ENCODE measurements at regions of chr5 and their contacts with region 1.

Region 1: DNA sequence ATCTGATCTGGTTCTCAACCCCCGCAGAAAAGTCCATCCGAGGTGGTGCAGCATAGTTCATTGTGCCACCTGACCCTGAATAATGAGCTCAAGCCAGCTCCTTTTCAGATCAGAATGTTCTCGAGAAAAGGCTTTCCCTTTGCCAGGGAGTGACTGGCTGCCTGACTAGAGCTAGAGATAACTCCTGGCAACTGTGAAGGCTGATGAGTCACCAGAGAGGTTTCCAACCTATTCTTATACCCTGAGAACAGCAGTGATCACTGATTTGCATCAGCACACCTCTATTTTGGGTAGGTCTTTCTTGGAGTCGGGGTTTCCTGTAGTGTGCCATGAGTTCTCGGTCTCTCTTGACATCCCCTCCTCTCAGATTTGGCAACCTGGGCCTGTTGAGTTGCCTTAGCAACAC is 127.9 kb downstream of the PIK3R1 start:
- DNase-seq: peak; percentile 51
- H3K4me3 Mint-ChIP-seq: no peak overlapping the region
- H3K27ac Mint-ChIP-seq: no peak overlapping the region
- H3K4me1 Mint-ChIP-seq: peaks cover 27% of the 10 kb centered on the region
- H3K27me3 Mint-ChIP-seq: no peaks in the 10 kb centered on the region

Region 2: GRCh38 chr5:68274847-68275651 is 68.4 kb before region 1 on chr5:
- CTCF ChIA-PET with region 1: no interaction called
- POLR2A ChIA-PET with region 1: no interaction called
- intact Hi-C with region 1: no loop called
- DNase-seq: no peak
- H3K4me3 Mint-ChIP-seq: peak overlapping the region; percentile 62
- H3K27ac Mint-ChIP-seq: peak overlapping the region; percentile 98
- H3K4me1 Mint-ChIP-seq: peaks cover 94% of the 10 kb centered on the region
- H3K27me3 Mint-ChIP-seq: no peaks in the 10 kb centered on the region

Region 3: DNA sequence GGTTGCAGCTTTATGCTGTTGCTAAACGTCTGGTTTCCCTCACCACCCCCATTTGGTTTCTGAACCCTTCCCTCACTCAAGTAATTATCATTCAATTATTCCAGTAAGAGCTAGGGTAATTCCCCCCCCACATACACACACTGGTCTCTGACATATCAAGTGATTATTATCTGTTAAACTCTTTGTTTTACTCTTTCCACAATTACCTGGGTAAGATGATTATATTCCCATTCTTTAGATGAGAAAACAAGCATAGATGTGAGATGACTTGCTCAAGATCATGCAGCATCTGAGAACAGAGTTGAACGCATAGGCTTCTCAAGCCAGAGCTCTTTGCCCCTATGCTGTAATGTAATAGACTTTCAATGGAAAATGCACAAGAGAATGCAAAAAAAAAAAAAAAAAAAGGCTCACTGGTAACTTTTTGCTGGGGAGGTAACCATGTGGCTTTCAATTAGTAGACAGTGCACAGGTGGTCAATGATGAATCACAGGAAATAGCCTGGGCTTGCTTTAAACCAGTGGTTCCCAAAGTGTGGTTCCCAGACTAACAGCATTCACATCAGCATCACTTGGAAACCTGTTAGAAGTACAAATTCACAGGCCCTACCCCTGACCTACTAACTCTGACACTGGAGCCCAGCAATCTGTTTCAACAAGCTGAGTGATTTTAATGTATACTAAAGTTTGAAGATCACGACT is 40.2 kb before region 1 on chr5:
- CTCF ChIA-PET with region 1: no interaction called
- POLR2A ChIA-PET with region 1: no interaction called
- intact Hi-C with region 1: loop called (anchors 2 kb)
- DNase-seq: no peak
- H3K4me3 Mint-ChIP-seq: no peak overlapping the region
- H3K27ac Mint-ChIP-seq: peak overlapping the region; percentile 57
- H3K4me1 Mint-ChIP-seq: peaks cover 49% of the 10 kb centered on the region
- H3K27me3 Mint-ChIP-seq: no peaks in the 10 kb centered on the region

Region 4: GRCh38 chr5:68331192-68332079 is 12.0 kb before region 1 on chr5:
- CTCF ChIA-PET with region 1: no interaction called
- POLR2A ChIA-PET with region 1: no interaction called
- intact Hi-C with region 1: no loop called
- DNase-seq: no peak
- H3K4me3 Mint-ChIP-seq: no peak overlapping the region
- H3K27ac Mint-ChIP-seq: no peak overlapping the region
- H3K4me1 Mint-ChIP-seq: peaks cover 2% of the 10 kb centered on the region
- H3K27me3 Mint-ChIP-seq: no peaks in the 10 kb centered on the region

Region 5: DNA sequence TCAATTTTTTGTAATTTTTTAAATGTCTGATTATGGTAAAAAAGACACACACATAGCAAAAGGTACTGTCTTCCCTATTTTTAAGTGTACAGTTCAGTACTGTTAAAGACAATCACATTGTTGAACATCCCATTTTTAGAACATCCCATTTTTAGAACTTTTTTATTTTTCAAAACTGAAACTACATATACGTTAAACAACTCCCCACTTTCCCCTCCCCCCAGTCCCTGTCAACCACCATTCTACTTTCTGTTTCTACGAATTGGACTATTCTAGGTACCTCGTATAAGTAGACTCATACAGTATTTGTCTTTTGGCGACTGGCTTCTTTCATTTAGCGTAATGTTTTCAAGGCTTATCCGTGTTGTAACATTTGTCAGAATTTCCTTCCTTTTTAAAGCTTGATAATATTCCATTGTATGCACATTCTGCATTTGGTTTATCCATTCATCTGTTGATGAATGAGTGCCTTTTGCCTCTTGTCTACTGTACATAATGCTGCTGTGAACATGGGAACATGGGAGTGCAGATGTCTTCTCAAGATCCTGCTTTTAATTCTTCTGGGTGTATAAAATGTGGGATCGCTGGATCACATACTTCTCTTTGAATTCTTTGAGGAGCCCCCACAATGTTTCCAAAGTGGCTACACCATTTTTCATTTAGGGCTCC is 26.2 kb after region 1 on chr5:
- CTCF ChIA-PET with region 1: no interaction called
- POLR2A ChIA-PET with region 1: no interaction called
- intact Hi-C with region 1: loop called (anchors 1 kb)
- DNase-seq: peak; percentile 69
- H3K4me3 Mint-ChIP-seq: peak overlapping the region; percentile 13
- H3K27ac Mint-ChIP-seq: peak overlapping the region; percentile 36
- H3K4me1 Mint-ChIP-seq: peaks cover 35% of the 10 kb centered on the region
- H3K27me3 Mint-ChIP-seq: no peaks in the 10 kb centered on the region

Region 6: DNA sequence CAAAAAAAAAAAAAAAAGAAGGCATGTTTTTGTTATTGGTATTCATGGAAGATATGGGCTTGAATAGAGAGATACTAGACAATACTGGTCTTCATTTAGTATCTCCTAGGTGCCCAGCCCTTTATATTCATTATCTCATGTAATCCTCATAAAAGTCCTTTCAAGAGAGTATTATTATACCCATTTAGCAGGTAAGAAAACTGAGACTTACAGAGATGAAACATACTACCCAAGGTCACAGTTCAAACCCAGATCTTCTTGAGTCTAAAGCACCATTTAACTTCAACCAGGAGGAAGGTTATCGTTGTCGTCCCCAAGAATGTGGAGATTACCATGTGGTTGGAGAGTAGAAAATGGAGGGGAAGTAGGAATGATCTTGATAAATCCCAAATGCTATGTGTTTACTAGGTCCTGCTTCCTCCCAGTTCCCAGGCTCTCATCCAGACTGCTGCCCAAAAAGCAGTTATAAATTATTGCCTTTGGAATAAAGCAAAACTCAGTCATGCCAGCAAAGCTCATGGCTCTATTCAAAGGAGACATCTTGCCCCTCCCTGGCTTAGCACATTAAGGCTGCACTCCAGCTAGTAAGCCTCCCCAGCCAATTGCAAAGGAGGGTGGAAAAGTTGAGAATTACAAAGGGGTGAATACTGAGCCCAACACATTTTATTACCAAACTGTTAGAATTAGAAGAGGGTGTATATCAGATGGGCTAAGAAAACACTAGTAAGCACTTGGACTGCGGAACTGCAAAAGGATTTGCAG is 36.0 kb after region 1 on chr5:
- CTCF ChIA-PET with region 1: no interaction called
- POLR2A ChIA-PET with region 1: no interaction called
- intact Hi-C with region 1: loop called (anchors 5 kb)
- DNase-seq: no peak
- H3K4me3 Mint-ChIP-seq: no peak overlapping the region
- H3K27ac Mint-ChIP-seq: no peak overlapping the region
- H3K4me1 Mint-ChIP-seq: peaks cover 56% of the 10 kb centered on the region
- H3K27me3 Mint-ChIP-seq: no peaks in the 10 kb centered on the region

Region 7: GRCh38 chr5:68398146-68398812 is 54.9 kb after region 1 on chr5:
- CTCF ChIA-PET with region 1: no interaction called
- POLR2A ChIA-PET with region 1: no interaction called
- intact Hi-C with region 1: loop called (anchors 1 kb)
- DNase-seq: peak; percentile 28
- H3K4me3 Mint-ChIP-seq: no peak overlapping the region
- H3K27ac Mint-ChIP-seq: no peak overlapping the region
- H3K4me1 Mint-ChIP-seq: peaks cover 4% of the 10 kb centered on the region
- H3K27me3 Mint-ChIP-seq: no peaks in the 10 kb centered on the region

Region 8: DNA sequence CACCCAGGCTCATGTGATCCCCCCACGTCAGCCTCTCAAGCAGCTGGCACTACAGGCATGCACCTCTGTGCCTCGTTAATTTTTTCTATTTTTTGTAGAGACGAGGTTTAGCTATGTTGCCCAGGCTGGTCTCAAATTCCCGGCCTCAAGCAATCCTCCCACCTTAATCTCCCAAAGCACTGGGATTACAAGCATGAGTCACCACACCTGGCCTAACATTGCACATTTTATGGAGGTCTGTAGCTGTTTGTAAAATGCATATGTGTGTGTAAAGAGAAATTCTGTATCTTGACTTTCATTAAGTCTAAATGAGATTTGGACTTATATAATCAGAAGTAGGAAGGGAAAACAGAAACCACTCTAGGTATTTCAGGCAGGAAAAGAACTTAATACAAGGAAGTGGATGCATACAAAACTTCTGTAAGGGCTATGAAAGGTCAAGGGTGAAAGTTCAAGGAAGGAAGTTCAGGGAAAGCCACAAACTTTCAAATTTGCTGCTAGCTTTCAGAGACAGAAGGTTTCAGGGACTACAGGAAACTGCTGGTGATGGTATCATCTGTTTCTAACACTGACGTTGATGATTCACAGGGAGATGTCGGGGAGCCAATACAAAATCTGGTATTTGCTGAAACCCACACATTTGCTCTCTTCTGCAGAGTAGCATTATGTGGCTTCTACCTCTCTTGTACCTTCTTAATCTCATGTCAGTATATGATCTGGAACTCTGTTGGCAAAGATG is 81.5 kb after region 1 on chr5:
- CTCF ChIA-PET with region 1: no interaction called
- POLR2A ChIA-PET with region 1: no interaction called
- intact Hi-C with region 1: loop called (anchors 2 kb)
- DNase-seq: peak; percentile 35
- H3K4me3 Mint-ChIP-seq: no peak overlapping the region
- H3K27ac Mint-ChIP-seq: no peak overlapping the region
- H3K4me1 Mint-ChIP-seq: peaks cover 42% of the 10 kb centered on the region
- H3K27me3 Mint-ChIP-seq: no peaks in the 10 kb centered on the region

Measured in activated CD4-positive, alpha-beta memory T cell treated with anti-CD3 and anti-CD28 coated beads for 36 hours (primary cell).